Prostate gland (tissue), 2 donors: ENCODE measurements at regions of chr7 and their contacts with region 1.

Region 1: GRCh38 chr7:47254081-47255006 is 327.6 kb downstream of the TNS3 start:
- DNase-seq: peak; percentile 67
- H3K4me3 ChIP-seq: peak overlapping the region; percentile 42 to 43
- H3K27ac ChIP-seq: peak overlapping the region; percentile 72 to 78
- H3K4me1 ChIP-seq: no peaks in the 10 kb centered on the region
- H3K27me3 ChIP-seq: no peaks in the 10 kb centered on the region
- CTCF ChIP-seq: peak; percentile 91 to 96 (median 95)
- POLR2A ChIP-seq: no peak

Region 2: GRCh38 chr7:45917658-45918057 is 1336.7 kb before region 1 on chr7:
- intact Hi-C with region 1: loop called (anchors 5 kb)
- DNase-seq: peak; percentile 70
- H3K4me3 ChIP-seq: no peak overlapping the region
- H3K27ac ChIP-seq: no peak overlapping the region
- H3K4me1 ChIP-seq: no peaks in the 10 kb centered on the region
- H3K27me3 ChIP-seq: no peaks in the 10 kb centered on the region
- CTCF ChIP-seq: peak; percentile 86 to 94 (median 91)
- POLR2A ChIP-seq: no peak

Region 3: GRCh38 chr7:47119261-47119865 is 135.0 kb before region 1 on chr7:
- intact Hi-C with region 1: no loop called
- DNase-seq: no peak
- H3K4me3 ChIP-seq: no peak overlapping the region
- H3K27ac ChIP-seq: no peak overlapping the region
- H3K4me1 ChIP-seq: no peaks in the 10 kb centered on the region
- H3K27me3 ChIP-seq: no peaks in the 10 kb centered on the region
- CTCF ChIP-seq: no peak
- POLR2A ChIP-seq: no peak